Panc1 (cell line): ENCODE measurements at regions of chr15 and their contacts with region 1.

Region 1: DNA sequence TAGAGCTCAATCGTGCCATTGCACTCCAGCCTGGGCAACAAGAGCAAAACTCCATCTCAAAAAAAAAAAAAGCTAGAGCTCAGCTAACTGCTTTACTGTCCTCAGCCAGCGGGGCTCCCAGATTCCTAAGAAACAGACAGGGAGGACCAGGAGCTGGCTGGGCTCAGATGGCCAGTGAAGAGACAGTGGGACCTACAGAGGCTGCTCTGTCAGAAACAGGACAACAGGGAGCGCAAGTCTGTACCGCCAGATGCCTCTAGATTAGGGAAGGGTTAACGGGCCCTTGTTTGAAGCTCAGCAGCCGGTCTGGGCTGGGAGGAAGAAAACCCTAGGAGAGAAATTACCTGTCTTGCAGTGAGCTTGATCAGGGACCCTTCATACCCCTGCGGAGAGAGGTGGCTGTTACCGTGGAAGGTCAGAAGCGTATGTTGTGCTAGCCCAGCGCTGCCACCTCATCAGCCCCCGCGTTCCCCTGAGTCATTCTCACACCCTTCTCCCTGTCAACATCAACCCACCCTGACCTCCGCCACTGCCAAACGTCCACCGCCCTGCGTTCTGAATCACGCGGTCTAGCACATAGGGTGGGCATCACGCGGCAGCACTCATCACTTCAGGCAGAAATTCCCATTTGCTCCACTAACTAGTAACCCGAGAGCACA is 25.3 kb downstream of the RBPMS2 start:
- DNase-seq: no peak
- ATAC-seq: peak; percentile 83
- H3K4me3 ChIP-seq: no peak overlapping the region
- H3K27ac ChIP-seq: no peak overlapping the region
- H3K4me1 ChIP-seq: no peaks in the 10 kb centered on the region
- H3K27me3 ChIP-seq: no peaks in the 10 kb centered on the region
- CTCF ChIP-seq: no peak

Region 2: GRCh38 chr15:63212050-63213004 is 1537.8 kb before region 1 on chr15:
- CTCF ChIA-PET with region 1: no interaction called
- POLR2A ChIA-PET with region 1: no interaction called
- in situ Hi-C with region 1: no loop called
- intact Hi-C with region 1: no loop called
- DNase-seq: no peak
- ATAC-seq: no peak
- H3K4me3 ChIP-seq: no peak overlapping the region
- H3K27ac ChIP-seq: no peak overlapping the region
- H3K4me1 ChIP-seq: no peaks in the 10 kb centered on the region
- H3K27me3 ChIP-seq: no peaks in the 10 kb centered on the region
- CTCF ChIP-seq: no peak

Region 3: DNA sequence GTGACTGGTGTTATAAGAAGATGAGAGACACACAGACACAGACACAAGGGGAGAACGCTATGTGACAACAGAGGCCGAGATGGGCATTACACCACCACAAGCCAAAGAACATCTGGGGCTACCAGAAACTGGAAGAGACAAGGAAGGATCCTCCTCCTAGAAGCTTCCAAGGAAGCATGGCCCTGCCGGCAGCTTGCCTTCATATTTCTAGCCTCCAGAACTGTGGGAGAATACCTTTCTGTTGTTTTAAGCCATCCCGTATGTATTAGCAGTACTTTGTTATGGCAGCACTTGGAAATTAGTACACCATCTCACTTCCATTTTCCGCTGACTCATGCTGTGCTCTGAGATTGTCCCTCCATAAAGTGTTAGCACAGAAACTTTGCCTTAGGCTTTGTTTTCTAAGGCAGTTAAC is 1329.8 kb before region 1 on chr15:
- CTCF ChIA-PET with region 1: no interaction called
- POLR2A ChIA-PET with region 1: no interaction called
- in situ Hi-C with region 1: no loop called
- intact Hi-C with region 1: no loop called
- DNase-seq: no peak
- ATAC-seq: no peak
- H3K4me3 ChIP-seq: no peak overlapping the region
- H3K27ac ChIP-seq: no peak overlapping the region; the same call in 1 of the 2 replicates
- H3K4me1 ChIP-seq: no peaks in the 10 kb centered on the region
- H3K27me3 ChIP-seq: no peaks in the 10 kb centered on the region
- CTCF ChIP-seq: no peak

Region 4: GRCh38 chr15:64800476-64800875 is 50.3 kb after region 1 on chr15:
- CTCF ChIA-PET with region 1: no interaction called
- POLR2A ChIA-PET with region 1: no interaction called
- in situ Hi-C with region 1: no loop called
- intact Hi-C with region 1: loop called (anchors 5 kb)
- DNase-seq: no peak
- ATAC-seq: no peak
- H3K4me3 ChIP-seq: no peak overlapping the region
- H3K27ac ChIP-seq: no peak overlapping the region
- H3K4me1 ChIP-seq: no peaks in the 10 kb centered on the region
- H3K27me3 ChIP-seq: no peaks in the 10 kb centered on the region
- CTCF ChIP-seq: no peak